ENCODE measurements at regions of chr3 and their contacts with region 1.

Region 1: GRCh38 chr3:189961525-189962161 is 159.1 kb downstream of the P3H2 start:
- DNase-seq: peak; percentile 91
- H3K4me3 Mint-ChIP-seq: no peak overlapping the region
- H3K27ac Mint-ChIP-seq: no peak overlapping the region
- H3K4me1 Mint-ChIP-seq: peaks cover 11% of the 10 kb centered on the region
- H3K27me3 Mint-ChIP-seq: no peaks in the 10 kb centered on the region
- CTCF ChIP-seq: peak; percentile 90

Region 2: GRCh38 chr3:190120269-190121060 is 158.8 kb after region 1 on chr3 and contains the start of gene P3H2:
- CTCF ChIA-PET with region 1: interaction called, 6 read pairs
- intact Hi-C with region 1: loop called (anchors 5 kb)
- DNase-seq: peak; percentile 94
- H3K4me3 Mint-ChIP-seq: peak within 1 kb of the TSS; percentile 63
- H3K27ac Mint-ChIP-seq: peak within 1 kb of the TSS; percentile 13
- H3K4me1 Mint-ChIP-seq: peaks cover 88% of the 10 kb centered on the region
- H3K27me3 Mint-ChIP-seq: peaks cover 21% of the 10 kb centered on the region
- CTCF ChIP-seq: peak; percentile 7
- total RNA-seq, gene P3H2: 5.9 and 7.1 TPM in 2 replicates

Region 3: DNA sequence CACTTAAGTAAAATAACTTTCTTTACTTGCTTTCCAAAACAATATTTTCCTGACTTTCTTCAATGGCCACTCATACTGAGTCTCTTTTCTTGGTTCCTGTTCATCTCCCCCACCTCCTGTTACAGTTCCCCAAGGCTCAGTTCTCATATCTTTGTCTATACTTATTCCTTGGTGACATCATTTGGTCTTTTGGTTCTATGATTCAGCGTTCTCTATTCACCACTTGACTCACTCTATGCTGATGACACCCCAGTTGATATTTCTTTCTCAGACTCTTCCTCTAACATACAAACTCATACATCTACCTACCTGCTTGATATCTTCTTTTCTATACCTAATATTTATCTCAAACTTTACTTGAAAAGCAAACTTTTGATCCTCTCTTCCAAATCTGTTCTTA is 244.1 kb after region 1 on chr3:
- CTCF ChIA-PET with region 1: interaction called, 13 read pairs
- intact Hi-C with region 1: loop called (anchors 1 kb)
- DNase-seq: no peak
- H3K4me3 Mint-ChIP-seq: no peak overlapping the region
- H3K27ac Mint-ChIP-seq: no peak overlapping the region
- H3K4me1 Mint-ChIP-seq: no peaks in the 10 kb centered on the region
- H3K27me3 Mint-ChIP-seq: no peaks in the 10 kb centered on the region
- CTCF ChIP-seq: no peak

Region 4: GRCh38 chr3:190424478-190425439 is 463.1 kb after region 1 on chr3:
- CTCF ChIA-PET with region 1: interaction called, 15 read pairs
- intact Hi-C with region 1: loop called (anchors 10 kb)
- DNase-seq: peak; percentile 86
- H3K4me3 Mint-ChIP-seq: peak overlapping the region; percentile 44
- H3K27ac Mint-ChIP-seq: peak overlapping the region; percentile 94
- H3K4me1 Mint-ChIP-seq: peaks cover 12% of the 10 kb centered on the region
- H3K27me3 Mint-ChIP-seq: no peaks in the 10 kb centered on the region
- CTCF ChIP-seq: peak; percentile 69

Region 5: GRCh38 chr3:191051037-191051436 is 1089.4 kb after region 1 on chr3:
- CTCF ChIA-PET with region 1: interaction called, 3 read pairs
- intact Hi-C with region 1: loop called (anchors 5 kb)
- DNase-seq: no peak
- H3K4me3 Mint-ChIP-seq: no peak overlapping the region
- H3K27ac Mint-ChIP-seq: no peak overlapping the region
- H3K4me1 Mint-ChIP-seq: no peaks in the 10 kb centered on the region
- H3K27me3 Mint-ChIP-seq: no peaks in the 10 kb centered on the region
- CTCF ChIP-seq: peak; percentile 39

Measured in Calu3 (cell line).